PC-3 (cell line): ENCODE measurements at regions of chr13 and their contacts with region 1.

Region 1: DNA sequence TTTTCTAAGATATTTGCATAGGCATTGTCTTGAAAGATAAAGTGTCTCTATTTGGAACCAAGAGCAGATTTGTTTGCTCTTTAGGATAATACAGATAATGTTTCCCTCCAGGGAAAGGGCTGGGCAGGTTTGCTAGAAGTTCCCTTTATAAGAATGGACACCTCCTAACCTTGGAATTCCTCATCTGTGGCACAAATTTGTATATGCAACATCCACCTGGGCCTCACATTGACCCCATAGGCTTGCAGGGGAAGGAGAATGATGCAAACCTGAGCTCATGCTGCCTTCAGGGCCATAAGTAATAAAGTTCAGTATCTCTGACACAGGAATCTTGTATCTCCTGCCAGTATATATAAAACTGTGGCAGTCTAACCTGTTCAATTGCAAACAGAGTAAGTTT is 508.4 kb upstream of the MIR17HG start:
- DNase-seq: peak; percentile 82
- ATAC-seq: peak; percentile 79
- H3K4me3 ChIP-seq: peak overlapping the region; percentile 35; the same call in 1 of the 2 replicates
- H3K27ac ChIP-seq: peak overlapping the region; percentile 98
- H3K4me1 ChIP-seq: peaks cover 30% of the 10 kb centered on the region
- H3K27me3 ChIP-seq: no peaks in the 10 kb centered on the region
- CTCF ChIP-seq: no peak

Region 2: DNA sequence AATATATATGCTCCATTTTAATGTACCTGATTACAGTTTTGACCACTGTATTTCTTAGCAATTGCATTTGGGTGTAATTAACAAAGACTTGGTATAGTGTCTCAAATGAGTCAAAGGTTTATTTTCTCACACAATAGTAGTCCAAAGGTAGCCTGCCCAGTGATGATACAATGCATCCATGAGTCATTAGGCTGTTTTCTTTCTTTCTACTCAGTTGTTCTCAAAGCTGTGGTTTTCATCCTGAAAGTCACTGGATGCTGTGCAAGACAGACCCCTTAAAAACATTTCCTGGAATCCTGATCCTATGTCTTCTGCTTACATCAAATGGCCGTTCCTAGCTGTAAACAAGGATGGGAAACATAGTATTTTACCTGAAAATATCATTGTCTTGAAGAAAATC is 142.8 kb before region 1 on chr13:
- CTCF ChIA-PET with region 1: no interaction called
- POLR2A ChIA-PET with region 1: no interaction called
- intact Hi-C with region 1: loop called (anchors 5 kb)
- DNase-seq: peak; percentile 74
- ATAC-seq: peak; percentile 84
- H3K4me3 ChIP-seq: peak overlapping the region; percentile 54; the same call in 1 of the 2 replicates
- H3K27ac ChIP-seq: peak overlapping the region; percentile 99
- H3K4me1 ChIP-seq: peaks cover 23% of the 10 kb centered on the region
- H3K27me3 ChIP-seq: no peaks in the 10 kb centered on the region
- CTCF ChIP-seq: no peak

Region 3: DNA sequence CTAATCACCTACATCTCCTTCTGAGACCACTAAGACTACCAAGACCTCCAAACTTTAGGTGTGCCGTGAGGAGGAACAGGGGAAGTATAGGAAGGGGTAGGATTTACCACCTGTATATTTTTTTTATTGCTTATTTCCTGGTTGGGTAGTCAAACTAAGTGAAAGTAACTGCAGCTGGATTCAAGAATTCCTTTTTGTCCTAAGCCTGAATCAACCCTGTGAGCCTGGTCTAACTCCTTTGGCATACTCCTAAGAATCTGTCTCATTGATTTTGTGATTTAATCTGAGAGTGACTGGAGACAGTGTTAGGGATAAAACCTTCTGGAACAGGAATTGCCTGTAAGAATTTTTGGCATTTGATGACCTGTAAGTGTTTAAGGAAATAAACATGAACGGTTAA is 15.0 kb before region 1 on chr13:
- CTCF ChIA-PET with region 1: no interaction called
- POLR2A ChIA-PET with region 1: interaction called, 11 read pairs
- intact Hi-C with region 1: no loop called
- DNase-seq: no peak
- ATAC-seq: no peak
- H3K4me3 ChIP-seq: no peak overlapping the region
- H3K27ac ChIP-seq: no peak overlapping the region
- H3K4me1 ChIP-seq: no peaks in the 10 kb centered on the region
- H3K27me3 ChIP-seq: no peaks in the 10 kb centered on the region
- CTCF ChIP-seq: no peak